ENCODE measurements at regions of chr10 and their contacts with region 1.

Region 1: DNA sequence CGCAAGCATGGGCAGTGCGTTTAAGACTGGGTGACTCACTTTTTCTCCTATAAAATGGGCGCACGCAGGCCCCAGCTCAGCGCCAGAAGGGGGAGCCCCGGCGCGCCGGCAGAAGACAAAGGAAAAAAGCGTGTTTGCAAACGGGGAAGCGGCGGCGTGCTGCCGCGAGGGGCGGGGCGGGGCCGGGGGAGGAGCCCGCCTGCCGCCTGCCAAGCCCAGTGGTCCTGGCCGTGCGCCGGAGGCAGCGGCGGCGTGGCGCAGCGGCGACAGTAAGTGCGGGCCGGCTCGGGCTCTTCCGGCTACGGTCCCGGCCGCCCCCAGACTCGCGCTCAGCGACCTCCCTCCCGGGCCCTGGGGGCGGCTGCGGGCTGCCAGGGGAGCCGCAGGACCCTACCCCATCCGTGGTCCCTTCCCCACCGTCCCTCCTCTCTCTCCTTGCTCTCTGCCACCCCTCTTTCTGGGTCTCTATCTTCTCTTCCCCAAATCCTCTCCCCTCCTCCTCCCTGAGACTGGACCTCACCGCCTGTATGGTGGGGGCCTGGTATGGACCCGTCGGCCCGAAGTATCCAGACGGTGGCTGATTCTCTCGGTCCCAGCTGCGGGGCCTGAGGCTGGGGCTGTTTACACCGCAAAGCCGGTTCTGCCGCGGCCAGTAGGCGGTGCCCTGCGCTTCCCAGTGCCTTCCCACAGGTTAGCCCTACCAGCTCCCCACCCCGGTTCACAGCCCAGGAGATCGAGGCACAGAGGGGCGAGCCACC is at the start of gene SLC29A3:
- DNase-seq: peak; percentile 88
- total RNA-seq, gene SLC29A3: 1.6 TPM

Region 2: GRCh38 chr10:71375952-71376351 is 56.7 kb after region 1 on chr10:
- intact Hi-C with region 1: loop called (anchors 2 kb)
- DNase-seq: no peak

Region 3: DNA sequence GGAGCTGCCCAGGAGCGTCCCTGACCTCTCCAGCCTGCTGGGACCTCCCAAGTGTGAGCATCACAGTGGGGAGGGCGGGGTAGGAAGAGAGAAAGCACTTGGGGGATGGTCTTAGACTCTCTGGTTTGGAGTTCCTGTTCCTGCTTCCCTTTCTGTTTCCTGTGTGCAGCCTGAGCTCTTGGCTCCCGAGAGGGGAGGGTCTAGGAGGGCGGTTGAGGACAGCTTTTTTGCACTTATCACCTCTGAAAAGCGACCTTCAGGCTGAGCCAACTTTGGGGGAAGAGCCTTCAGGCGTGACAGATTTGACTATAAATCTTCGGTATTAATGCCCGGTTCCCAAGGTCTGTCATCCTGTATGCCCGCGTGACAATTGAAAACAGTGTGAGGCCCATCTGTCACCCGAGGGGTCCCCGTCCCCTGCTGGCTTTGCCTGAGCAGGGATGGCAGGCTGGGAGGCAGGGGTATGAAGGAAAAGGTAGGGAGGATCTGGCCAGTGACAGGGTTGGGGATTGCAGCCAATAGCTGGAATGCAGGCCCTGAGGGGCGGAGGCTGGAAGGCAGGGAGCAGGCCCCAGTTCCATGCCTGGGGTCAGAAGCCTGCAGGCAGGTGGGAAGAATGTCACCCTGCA is 156.1 kb after region 1 on chr10:
- intact Hi-C with region 1: loop called (anchors 5 kb)
- DNase-seq: no peak

Region 4: GRCh38 chr10:71569775-71570588 is 250.8 kb after region 1 on chr10:
- intact Hi-C with region 1: loop called (anchors 5 kb)
- DNase-seq: peak; percentile 81

Region 5: GRCh38 chr10:71696628-71697326 is 377.6 kb after region 1 on chr10:
- intact Hi-C with region 1: loop called (anchors 5 kb)
- DNase-seq: no peak

Region 6: GRCh38 chr10:71812016-71812912 is 493.0 kb after region 1 on chr10:
- intact Hi-C with region 1: loop called (anchors 5 kb)
- DNase-seq: peak; percentile 93

Region 7: GRCh38 chr10:71899665-71900412 is 580.6 kb after region 1 on chr10:
- intact Hi-C with region 1: loop called (anchors 5 kb)
- DNase-seq: no peak

Region 8: DNA sequence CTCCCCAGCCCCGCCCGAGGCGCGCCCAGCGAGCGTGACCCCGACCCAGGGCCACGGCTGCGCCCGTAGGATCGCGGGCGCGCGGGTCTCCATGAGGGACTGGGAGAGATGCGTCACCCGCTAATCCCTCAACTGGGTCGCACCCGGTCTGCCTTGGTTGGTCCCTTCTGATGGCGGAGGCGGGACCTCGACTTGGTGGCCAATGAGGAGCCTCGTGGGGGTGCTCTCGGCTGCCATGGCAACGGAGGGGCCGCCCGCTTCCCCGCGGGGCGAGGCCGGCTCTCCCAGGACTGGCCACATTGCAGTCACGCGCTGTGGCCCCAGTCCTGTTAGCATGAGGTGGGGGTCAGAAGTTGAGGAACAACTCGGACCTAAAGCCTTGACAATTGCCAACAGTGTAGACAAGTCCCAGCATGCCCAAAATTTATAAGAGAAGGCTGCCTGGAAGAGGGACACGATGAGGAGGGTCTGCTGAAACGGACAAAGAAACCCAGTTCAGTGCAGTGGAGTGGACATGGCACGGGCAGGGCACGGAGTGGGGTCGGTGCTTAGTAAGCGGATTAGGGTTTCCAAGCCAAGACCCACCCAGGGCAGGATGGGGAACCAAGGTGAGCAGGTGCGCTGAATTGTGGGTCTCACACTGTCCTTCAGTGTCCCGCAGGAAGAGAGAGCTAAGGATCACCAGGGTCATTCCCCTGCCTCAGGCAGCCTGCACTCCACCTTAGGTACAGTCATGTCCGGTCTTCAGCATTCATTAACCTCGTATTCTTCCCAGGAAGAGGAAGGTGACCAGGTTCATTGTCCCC is 979.0 kb after region 1 on chr10:
- intact Hi-C with region 1: no loop called
- DNase-seq: peak; percentile 98

Region 9: DNA sequence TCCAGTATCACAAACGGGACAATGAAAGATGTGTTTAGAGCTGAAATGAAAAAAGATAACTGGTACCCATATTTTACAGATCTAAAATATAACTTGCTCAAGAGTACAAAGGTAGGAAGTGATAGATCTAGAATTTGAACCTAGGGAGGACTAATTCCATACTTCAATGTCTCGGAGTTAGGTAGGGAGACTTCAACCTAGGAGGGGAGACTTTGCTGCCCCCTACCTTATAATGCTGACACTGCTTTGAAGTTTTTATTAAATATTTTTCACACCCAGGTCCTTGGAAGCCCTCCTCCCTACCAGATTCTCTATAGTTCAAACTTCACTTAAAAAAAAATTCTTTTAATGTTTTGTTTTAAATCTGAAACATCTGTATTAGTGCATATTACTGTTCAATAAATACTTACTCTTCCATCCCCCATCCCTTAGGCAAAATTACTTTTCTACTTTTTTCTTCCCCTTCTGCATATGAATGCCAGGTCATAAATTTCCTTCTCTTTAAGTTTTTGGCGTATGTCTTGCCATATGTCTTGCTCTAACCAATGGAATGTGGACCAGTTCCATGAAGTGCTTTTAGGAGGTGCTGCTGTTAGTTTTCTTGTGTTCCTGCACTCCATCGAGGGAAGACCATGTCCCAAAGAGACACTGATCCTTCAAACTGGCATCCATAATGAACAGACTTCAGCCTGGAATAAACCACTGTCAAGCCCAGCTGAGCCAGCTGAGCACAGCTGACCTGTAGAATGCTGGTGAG is 1248.8 kb after region 1 on chr10:
- intact Hi-C with region 1: no loop called
- DNase-seq: no peak